Tibial artery (tissue), 4 donors: ENCODE measurements at regions of chr4 and their contacts with region 1.

Region 1: GRCh38 chr4:186144142-186144955 is 39.8 kb downstream of the FAM149A start:
- DNase-seq: peak; percentile 56 to 76
- H3K4me3 ChIP-seq: peak overlapping the region; percentile 62 to 65
- H3K27ac ChIP-seq: peak overlapping the region; percentile 84 to 85
- H3K4me1 ChIP-seq: peaks cover 0 to 15% (median 3%) of the 10 kb centered on the region in 4 donors
- H3K27me3 ChIP-seq: no peaks in the 10 kb centered on the region
- CTCF ChIP-seq: peak in 1 of 2 experiments; percentile 36

Region 2: DNA sequence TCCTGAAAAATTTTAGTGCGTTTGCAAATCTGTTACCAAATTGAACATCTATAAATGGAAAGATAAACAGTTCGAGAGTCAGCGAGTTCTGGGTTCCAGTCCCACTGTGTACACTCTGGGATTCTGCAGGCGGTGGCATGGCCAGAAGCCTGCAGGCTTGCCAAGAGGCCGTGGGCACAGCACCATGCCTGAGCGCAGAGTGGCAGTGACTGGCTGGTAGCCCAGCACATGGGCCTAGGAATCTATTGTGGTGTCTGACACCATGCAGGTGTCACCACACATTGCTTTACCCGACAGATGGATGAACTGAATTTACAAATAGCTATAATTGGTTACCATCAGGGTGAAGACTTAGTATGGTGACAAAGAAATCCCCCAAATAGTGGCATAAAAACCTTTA is 147.1 kb before region 1 on chr4:
- intact Hi-C with region 1: no loop called
- DNase-seq: peak; percentile 37 to 89
- H3K4me3 ChIP-seq: no peak overlapping the region
- H3K27ac ChIP-seq: peak overlapping the region; percentile 76 to 86
- H3K4me1 ChIP-seq: peaks cover 0 to 77% (median 21%) of the 10 kb centered on the region in 4 donors
- H3K27me3 ChIP-seq: no peaks in the 10 kb centered on the region
- CTCF ChIP-seq: no peak

Region 3: DNA sequence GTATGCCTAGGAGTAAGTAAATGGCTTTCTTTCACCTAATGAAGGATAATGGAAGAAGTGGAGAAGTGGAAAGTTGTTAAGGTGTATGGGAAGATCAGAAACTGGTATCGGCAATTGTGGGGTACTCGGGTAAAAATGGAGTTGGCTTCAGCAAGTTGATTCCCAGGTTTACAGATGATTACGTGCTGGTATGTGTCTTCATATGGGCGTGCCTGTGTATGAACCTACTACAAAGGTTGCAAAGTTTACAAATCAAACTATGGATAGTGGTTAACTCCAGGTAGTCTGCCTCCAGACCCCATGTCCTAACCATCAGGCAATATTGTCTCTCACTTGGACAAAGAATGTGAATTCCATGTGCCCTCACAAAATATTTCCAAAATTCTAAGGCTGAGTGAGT is 74.6 kb before region 1 on chr4:
- intact Hi-C with region 1: loop called (anchors 2 kb)
- DNase-seq: no peak
- H3K4me3 ChIP-seq: peak overlapping the region in 1 of 2 donors; percentile 51
- H3K27ac ChIP-seq: peak overlapping the region in 1 of 2 donors; percentile 63
- H3K4me1 ChIP-seq: peaks cover 0 to 6% (median 0%) of the 10 kb centered on the region in 4 donors
- H3K27me3 ChIP-seq: no peaks in the 10 kb centered on the region
- CTCF ChIP-seq: no peak